ENCODE measurements at regions of chr10 and their contacts with region 1.

Region 1: DNA sequence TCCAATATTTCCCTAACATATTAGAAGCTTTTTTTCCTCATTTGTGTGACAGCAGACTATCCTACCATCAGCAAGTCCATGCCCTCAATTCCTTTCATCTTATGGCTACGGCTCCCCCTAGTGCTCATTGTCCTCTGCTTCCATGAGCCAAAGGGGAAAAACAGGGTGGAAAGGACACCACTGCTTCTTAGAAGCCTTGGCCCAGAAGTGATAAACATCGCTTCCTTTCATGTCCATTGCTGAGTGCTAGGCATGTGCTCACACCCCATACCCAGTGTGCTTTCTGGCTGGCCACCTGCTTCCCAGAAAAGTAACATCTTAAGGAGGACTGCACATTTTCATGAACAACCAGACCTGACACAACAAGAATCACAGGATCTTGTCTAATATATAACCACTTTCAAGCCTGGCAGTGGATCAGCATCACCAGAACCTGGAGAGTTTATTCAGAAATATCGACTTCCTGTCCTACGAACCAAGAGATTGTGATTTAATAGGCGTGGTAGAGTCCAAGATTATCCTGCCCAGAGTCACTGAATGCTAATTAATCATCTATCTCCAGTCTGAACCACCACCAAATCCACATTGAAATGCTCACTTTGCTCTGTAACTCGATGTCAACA is 650.5 kb upstream of the SORCS1 start:
- DNase-seq: peak; percentile 28 to 80 (median 50)
- H3K4me3 ChIP-seq: no peak overlapping the region
- H3K27ac ChIP-seq: no peak overlapping the region
- H3K4me1 ChIP-seq: no peaks in the 10 kb centered on the region
- H3K27me3 ChIP-seq: no peaks in the 10 kb centered on the region
- CTCF ChIP-seq: peak in 5 of 6 experiments; percentile 34 to 62 (median 54)
- POLR2A ChIP-seq: no peak

Region 2: GRCh38 chr10:106625751-106626150 is 1189.2 kb before region 1 on chr10:
- intact Hi-C with region 1: loop called in 1 of 2 experiments (anchors 10 kb)
- DNase-seq: no peak
- H3K4me3 ChIP-seq: no peak overlapping the region
- H3K27ac ChIP-seq: no peak overlapping the region
- H3K4me1 ChIP-seq: no peaks in the 10 kb centered on the region
- H3K27me3 ChIP-seq: no peaks in the 10 kb centered on the region
- CTCF ChIP-seq: no peak
- POLR2A ChIP-seq: no peak

Region 3: GRCh38 chr10:106705681-106706100 is 1109.3 kb before region 1 on chr10:
- intact Hi-C with region 1: loop called in 1 of 2 experiments (anchors 10 kb)
- DNase-seq: peak; percentile 36 to 82 (median 66)
- H3K4me3 ChIP-seq: no peak overlapping the region
- H3K27ac ChIP-seq: no peak overlapping the region
- H3K4me1 ChIP-seq: no peaks in the 10 kb centered on the region
- H3K27me3 ChIP-seq: no peaks in the 10 kb centered on the region
- CTCF ChIP-seq: peak; percentile 46 to 86 (median 68)
- POLR2A ChIP-seq: no peak

Measured in adrenal gland (tissue), 19 donors.